T-cell (primary cell): ENCODE measurements at regions of chr14 and their contacts with region 1.

Region 1: DNA sequence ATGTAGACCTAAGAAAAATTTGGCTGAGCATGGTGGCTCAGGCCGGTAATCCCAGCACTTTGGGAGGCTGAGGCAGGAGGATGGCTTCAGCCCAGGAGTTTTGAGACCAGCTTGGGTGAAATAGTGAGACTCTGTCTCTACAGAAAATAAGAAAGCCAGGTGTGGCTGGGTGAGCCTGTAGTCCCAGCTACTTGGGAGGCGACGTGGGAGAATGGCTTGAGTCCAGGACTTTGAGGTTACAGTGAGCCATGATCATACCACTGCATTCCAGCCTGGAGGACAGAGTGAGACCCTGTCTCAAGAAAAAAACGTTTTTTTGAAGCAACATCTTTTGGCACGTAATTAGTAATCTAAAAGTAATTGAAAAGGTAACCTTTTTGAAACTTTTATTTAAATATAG is 70.9 kb downstream of the FERMT2 start:
- DNase-seq: no peak
- ATAC-seq: no peak
- H3K4me3 ChIP-seq: no peak overlapping the region
- H3K4me3 Mint-ChIP-seq: no peak overlapping the region
- H3K27ac ChIP-seq: no peak overlapping the region
- H3K27ac Mint-ChIP-seq: no peak overlapping the region
- H3K4me1 ChIP-seq: no peaks in the 10 kb centered on the region
- H3K4me1 Mint-ChIP-seq: no peaks in the 10 kb centered on the region
- H3K27me3 ChIP-seq: no peaks in the 10 kb centered on the region
- H3K27me3 Mint-ChIP-seq: peaks cover 0 to 4% of the 10 kb centered on the region in 2 donors

Region 2: DNA sequence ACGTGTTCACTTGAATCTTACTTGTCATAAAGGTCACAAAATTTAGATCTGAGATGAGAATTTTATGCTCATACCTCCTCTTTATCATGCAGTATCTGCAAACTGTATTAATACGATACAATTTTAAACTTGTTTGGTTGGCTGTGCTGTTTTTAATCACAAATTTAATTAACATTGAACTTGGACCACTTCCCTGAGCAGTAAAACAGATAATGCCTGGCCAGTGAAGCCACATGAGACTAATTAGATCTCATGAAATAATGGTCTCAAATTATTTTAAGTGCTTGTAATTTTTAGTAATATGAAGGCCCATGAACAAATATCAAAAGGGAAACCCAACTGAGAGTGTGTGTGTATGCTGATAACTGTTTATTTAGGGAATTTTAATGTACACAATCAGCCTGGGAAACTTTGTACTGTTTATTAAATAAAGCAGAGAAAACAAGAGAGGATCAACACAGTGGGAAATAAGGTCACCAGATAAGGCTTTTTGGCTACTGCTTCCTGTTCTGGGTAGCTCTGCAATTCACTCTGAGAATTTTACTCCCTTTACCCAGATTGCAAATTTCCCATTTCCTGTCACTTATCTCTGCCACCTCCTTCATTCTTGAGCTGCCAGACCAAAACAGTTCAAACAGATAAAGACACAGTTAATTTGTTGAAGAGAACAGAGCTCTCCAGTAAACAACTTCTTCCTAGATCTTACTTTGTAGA is 27.0 kb before region 1 on chr14:
- CTCF ChIA-PET with region 1: interaction called in 1 of 2 experiments, 11 read pairs
- POLR2A ChIA-PET with region 1: no interaction called
- DNase-seq: no peak
- ATAC-seq: no peak
- H3K4me3 ChIP-seq: no peak overlapping the region
- H3K4me3 Mint-ChIP-seq: no peak overlapping the region
- H3K27ac ChIP-seq: no peak overlapping the region
- H3K27ac Mint-ChIP-seq: no peak overlapping the region
- H3K4me1 ChIP-seq: peaks cover 0 to 2% of the 10 kb centered on the region in 2 experiments
- H3K4me1 Mint-ChIP-seq: peaks cover 0 to 3% (median 2%) of the 10 kb centered on the region in 3 donors
- H3K27me3 ChIP-seq: no peaks in the 10 kb centered on the region
- H3K27me3 Mint-ChIP-seq: no peaks in the 10 kb centered on the region